Mammary epithelial cell (primary cell): ENCODE measurements at regions of chr9 and their contacts with region 1.

Region 1: DNA sequence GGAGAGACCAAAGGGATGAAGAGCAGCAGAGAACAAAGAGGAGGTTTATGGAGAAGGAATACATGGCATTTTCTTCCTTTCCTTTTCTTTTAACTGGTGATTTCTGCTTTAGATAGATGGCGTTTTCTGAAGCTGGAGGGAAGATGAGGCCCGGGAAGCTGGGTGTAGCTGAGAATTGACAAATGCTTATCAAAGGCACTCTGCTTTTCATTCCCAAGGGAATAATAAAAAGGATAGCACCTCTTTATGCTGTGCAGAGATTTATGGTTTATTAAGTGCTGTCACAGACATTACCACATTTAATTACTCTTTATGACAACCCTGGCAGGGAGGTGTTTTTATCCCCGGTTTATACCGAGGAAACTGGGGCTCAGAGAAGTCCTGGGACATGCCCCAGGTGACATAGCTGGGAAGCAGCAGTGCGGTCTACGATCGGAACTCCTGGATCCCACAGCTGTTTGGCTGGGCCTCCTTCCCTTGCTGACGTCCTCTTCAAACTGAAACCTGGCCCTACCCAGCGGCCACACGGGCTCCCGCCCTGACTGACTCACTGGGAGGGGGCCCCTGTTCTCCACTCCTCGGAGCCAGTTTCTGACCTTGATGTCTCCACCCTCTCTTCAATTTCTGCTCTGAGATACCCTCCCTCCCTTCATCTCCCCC is 8.2 kb upstream of the EPB41L4B start:
- DNase-seq: peak; percentile 96
- H3K4me3 ChIP-seq: no peak overlapping the region
- H3K27ac ChIP-seq: peak overlapping the region; percentile 80
- H3K4me1 ChIP-seq: peaks cover 39% of the 10 kb centered on the region
- H3K27me3 ChIP-seq: no peaks in the 10 kb centered on the region
- CTCF ChIP-seq: no peak

Region 2: GRCh38 chr9:109017493-109017892 is 311.6 kb before region 1 on chr9:
- CTCF ChIA-PET with region 1: no interaction called
- dilution Hi-C with region 1: no loop called
- in situ Hi-C with region 1: no loop called
- intact Hi-C with region 1: no loop called
- DNase-seq: no peak
- H3K4me3 ChIP-seq: no peak overlapping the region
- H3K27ac ChIP-seq: no peak overlapping the region
- H3K4me1 ChIP-seq: peaks cover 23% of the 10 kb centered on the region
- H3K27me3 ChIP-seq: no peaks in the 10 kb centered on the region
- CTCF ChIP-seq: no peak

Region 3: GRCh38 chr9:109192732-109193361 is 136.3 kb before region 1 on chr9:
- CTCF ChIA-PET with region 1: interaction called, 22 read pairs
- dilution Hi-C with region 1: no loop called
- in situ Hi-C with region 1: no loop called
- intact Hi-C with region 1: no loop called
- DNase-seq: no peak
- H3K4me3 ChIP-seq: no peak overlapping the region
- H3K27ac ChIP-seq: no peak overlapping the region
- H3K4me1 ChIP-seq: no peaks in the 10 kb centered on the region
- H3K27me3 ChIP-seq: no peaks in the 10 kb centered on the region
- CTCF ChIP-seq: peak; percentile 33 to 61

Region 4: DNA sequence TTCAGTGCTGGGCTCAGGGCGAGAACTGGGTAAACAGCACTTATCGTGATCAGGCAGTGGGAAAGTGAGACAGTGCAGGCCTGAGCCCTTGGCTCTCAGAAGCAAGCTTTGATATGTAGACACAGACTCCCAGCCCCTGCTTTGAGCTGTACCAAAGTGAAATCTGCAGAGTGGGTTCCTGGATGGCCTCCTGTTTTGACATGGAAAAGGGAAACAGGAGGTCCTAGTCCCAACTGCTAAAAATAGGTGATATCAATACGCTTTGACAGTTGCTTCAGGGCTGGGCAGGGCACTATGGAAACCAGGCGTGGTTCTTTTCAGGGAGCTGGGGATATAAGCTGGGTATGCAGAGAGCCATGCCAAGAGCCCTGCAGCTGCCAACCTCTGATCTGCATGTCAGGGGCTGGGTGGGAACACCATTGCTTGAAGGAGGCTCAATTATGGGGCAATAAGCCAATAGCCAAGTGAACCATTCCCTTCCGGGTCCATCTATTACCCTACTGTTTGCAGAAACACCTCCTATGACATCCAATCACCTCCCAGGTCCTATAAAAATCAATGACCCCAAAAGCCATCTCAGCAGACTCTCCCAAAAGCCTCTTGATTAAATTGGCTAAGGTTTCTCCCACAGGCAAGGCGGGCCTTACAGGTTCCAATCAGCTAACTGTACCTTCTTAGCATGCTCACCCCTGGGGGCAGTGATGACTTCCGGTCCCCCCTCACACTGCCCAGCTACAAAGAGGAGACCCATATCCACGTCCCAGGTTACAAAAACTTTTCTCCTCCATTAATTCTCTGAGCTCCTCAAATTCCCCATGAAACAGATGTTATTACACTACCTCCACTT is 54.0 kb before region 1 on chr9:
- CTCF ChIA-PET with region 1: no interaction called
- dilution Hi-C with region 1: no loop called
- in situ Hi-C with region 1: no loop called
- intact Hi-C with region 1: no loop called
- DNase-seq: no peak
- H3K4me3 ChIP-seq: no peak overlapping the region
- H3K27ac ChIP-seq: no peak overlapping the region
- H3K4me1 ChIP-seq: peaks cover 5% of the 10 kb centered on the region
- H3K27me3 ChIP-seq: no peaks in the 10 kb centered on the region
- CTCF ChIP-seq: no peak

Region 5: DNA sequence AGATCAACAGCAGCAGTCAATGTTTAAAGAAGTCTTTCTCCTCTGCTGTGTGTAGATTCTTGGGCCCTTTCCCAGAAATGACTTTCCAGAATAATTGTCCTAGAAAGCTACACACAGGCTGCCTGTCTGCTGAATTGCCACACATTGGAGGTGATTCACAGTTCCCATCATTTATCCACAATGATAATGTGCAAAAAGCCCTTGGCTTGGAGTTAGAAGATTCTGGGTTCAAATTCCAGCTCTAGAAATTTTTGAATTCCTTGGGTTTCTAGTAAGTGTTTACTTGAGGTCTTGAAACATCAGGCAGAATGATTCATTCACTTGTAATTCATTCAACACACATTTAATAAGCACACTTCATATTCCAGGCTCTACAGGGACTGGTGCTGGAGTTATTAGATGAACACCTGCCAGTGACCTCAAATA is 20.3 kb after region 1 on chr9:
- CTCF ChIA-PET with region 1: interaction called, 20 read pairs
- dilution Hi-C with region 1: no loop called
- in situ Hi-C with region 1: no loop called
- intact Hi-C with region 1: loop called (anchors 2 kb)
- DNase-seq: peak; percentile 73
- H3K4me3 ChIP-seq: no peak overlapping the region
- H3K27ac ChIP-seq: no peak overlapping the region
- H3K4me1 ChIP-seq: peaks cover 20% of the 10 kb centered on the region
- H3K27me3 ChIP-seq: peaks cover 11% of the 10 kb centered on the region
- CTCF ChIP-seq: no peak

Region 6: GRCh38 chr9:109401168-109401989 is 72.3 kb after region 1 on chr9:
- CTCF ChIA-PET with region 1: no interaction called
- dilution Hi-C with region 1: no loop called
- in situ Hi-C with region 1: no loop called
- intact Hi-C with region 1: loop called (anchors 5 kb)
- DNase-seq: peak; percentile 53
- H3K4me3 ChIP-seq: no peak overlapping the region
- H3K27ac ChIP-seq: no peak overlapping the region
- H3K4me1 ChIP-seq: no peaks in the 10 kb centered on the region
- H3K27me3 ChIP-seq: no peaks in the 10 kb centered on the region
- CTCF ChIP-seq: peak; percentile 88 to 94